BJ (cell line): ENCODE measurements at regions of chr10 and their contacts with region 1.

Region 1: GRCh38 chr10:101602761-101603398 is 14.8 kb downstream of the DPCD start:
- DNase-seq: no peak
- H3K4me3 ChIP-seq: no peak overlapping the region
- H3K27me3 ChIP-seq: no peaks in the 10 kb centered on the region
- CTCF ChIP-seq: peak; percentile 96

Region 2: GRCh38 chr10:101189541-101190401 is 413.1 kb before region 1 on chr10:
- CTCF ChIA-PET with region 1: no interaction called
- POLR2A ChIA-PET with region 1: no interaction called
- DNase-seq: no peak
- H3K4me3 ChIP-seq: no peak overlapping the region
- H3K27me3 ChIP-seq: peaks cover 5% of the 10 kb centered on the region
- CTCF ChIP-seq: no peak

Region 3: GRCh38 chr10:101587725-101588653 is 14.9 kb before region 1 on chr10 and contains the starts of genes DPCD and POLL:
- CTCF ChIA-PET with region 1: interaction called, 24 read pairs
- POLR2A ChIA-PET with region 1: no interaction called
- DNase-seq: peak; percentile 63
- H3K4me3 ChIP-seq: peak within 1 kb of the TSS; percentile 92
- H3K27me3 ChIP-seq: no peaks in the 10 kb centered on the region
- CTCF ChIP-seq: no peak
- polyA plus RNA-seq, gene DPCD: 46.4 and 51.9 TPM in 2 replicates
- polyA plus RNA-seq, gene POLL: 18.8 and 31.3 TPM in 2 replicates

Region 4: GRCh38 chr10:101774589-101775272 is 171.9 kb after region 1 on chr10:
- CTCF ChIA-PET with region 1: interaction called, 20 read pairs
- POLR2A ChIA-PET with region 1: no interaction called
- DNase-seq: no peak
- H3K4me3 ChIP-seq: no peak overlapping the region
- H3K27me3 ChIP-seq: peaks cover 41% of the 10 kb centered on the region
- CTCF ChIP-seq: no peak